Heart left ventricle (tissue), 16 donors: ENCODE measurements at regions of chr5 and their contacts with region 1.

Region 1: GRCh38 chr5:3237276-3237868 is 358.3 kb upstream of the IRX1 start:
- DNase-seq: no peak
- ATAC-seq: no peak
- H3K4me3 ChIP-seq: no peak overlapping the region
- H3K27ac ChIP-seq: no peak overlapping the region
- H3K4me1 ChIP-seq: no peaks in the 10 kb centered on the region
- H3K27me3 ChIP-seq: no peaks in the 10 kb centered on the region
- CTCF ChIP-seq: no peak
- POLR2A ChIP-seq: no peak

Region 2: GRCh38 chr5:2739360-2740050 is 497.9 kb before region 1 on chr5:
- intact Hi-C with region 1: loop called in 1 of 10 experiments (anchors 5 kb)
- DNase-seq: peak in 1 of 5 donors; percentile 62
- ATAC-seq: peak in 2 of 4 donors; percentile 53 to 71
- H3K4me3 ChIP-seq: peak overlapping the region; percentile 33 to 64 (median 54)
- H3K27ac ChIP-seq: no peak overlapping the region
- H3K4me1 ChIP-seq: peaks cover 0 to 22% (median 2%) of the 10 kb centered on the region in 12 donors
- H3K27me3 ChIP-seq: peaks cover 30 to 90% (median 68%) of the 10 kb centered on the region in 9 donors
- CTCF ChIP-seq: no peak
- POLR2A ChIP-seq: no peak